Right ventricle myocardium inferior (tissue), 1 donor: ENCODE measurements at regions of chr1 and their contacts with region 1.

Region 1: GRCh38 chr1:155562581-155563376 is at the start of gene ASH1L:
- DNase-seq: peak; percentile 95
- ATAC-seq: peak; percentile 96
- total RNA-seq, gene ASH1L: 40.3 TPM

Region 2: DNA sequence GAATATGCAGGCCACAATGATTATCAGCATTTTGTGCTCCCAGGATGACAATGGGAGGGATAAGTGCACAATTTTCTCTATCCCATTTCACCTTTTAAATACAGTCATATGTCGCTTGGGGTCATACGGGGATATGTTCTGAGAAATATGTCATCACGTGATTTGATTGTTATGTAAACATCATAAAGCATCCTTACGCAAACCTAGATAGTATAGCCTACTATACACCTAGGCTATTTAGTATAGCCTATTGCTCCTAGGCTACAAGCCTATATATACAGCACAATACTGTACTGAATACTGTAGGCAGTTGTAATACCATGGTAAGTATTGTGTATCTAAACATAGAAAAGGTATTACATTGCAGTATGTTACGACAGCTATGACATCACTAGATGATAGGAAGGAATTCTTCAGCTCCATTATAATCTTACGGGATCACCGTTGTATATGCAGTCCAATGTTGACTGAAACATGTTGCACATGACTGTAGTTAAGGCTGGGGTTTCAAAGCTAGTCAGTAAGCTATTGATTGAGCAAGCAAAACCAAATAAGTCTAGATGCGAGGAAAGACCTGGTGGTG is 223.2 kb before region 1 on chr1:
- intact Hi-C with region 1: no loop called
- DNase-seq: no peak
- ATAC-seq: no peak

Region 3: DNA sequence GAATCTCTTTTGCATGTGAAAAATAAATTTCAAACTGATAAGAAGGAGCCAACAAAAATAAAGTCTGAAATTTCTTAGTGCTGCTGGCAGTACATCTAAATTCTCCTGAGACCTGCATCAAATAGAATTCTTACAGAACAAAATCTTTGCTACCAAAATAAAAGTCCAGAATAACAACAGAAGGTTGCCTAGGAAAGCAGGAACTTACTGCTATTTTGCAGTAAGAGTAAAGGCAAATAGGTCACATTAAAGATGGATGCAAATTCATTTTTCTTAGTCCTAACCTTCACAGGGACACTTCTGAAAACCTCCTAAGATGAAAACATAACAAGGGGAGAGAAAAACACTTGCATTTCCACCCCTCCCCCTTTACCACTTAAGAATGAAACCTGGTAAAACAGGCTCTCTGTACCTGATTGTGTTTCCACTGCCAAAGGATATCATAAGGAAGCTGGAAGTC is 183.1 kb before region 1 on chr1:
- intact Hi-C with region 1: loop called (anchors 10 kb)
- DNase-seq: no peak
- ATAC-seq: peak; percentile 85

Region 4: GRCh38 chr1:155537193-155537592 is 25.6 kb before region 1 on chr1:
- intact Hi-C with region 1: loop called (anchors 2 kb)
- DNase-seq: no peak
- ATAC-seq: no peak